MCF 10A (cell line): ENCODE measurements at regions of chr20 and their contacts with region 1.

Region 1: DNA sequence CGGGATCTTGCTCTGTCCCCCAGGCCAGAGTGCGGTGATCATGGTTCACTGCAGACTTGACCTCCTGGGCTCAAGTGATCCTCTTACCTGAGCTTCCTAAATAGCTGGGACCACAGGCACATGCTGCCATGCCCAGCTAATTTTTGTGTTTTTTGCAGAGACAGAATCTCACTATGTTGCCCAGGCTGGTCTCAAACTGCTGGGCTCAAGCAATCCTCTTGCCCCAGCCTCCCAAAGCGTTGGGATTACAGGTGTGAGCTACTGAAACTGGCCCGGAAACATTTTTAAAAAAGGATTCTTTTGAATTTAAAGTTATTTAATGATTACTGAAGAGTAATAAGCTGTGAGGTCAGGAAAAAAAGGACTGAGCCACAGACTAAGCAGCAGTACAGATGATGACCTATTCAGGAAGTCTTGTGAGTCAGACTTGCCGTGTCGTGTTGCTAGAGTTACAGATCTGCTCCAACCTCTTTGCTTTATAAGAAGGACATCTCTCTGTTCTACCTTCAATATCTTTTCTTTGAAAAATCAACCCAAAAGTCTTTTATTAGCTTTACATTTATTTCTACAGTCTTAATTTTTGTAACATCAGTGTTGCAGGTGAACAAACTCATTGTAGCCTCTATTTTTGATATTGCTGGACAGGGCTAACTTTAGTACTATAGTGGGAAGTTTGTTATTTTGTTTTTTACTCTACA is 108.7 kb downstream of the NCOA3 start:
- DNase-seq: peak; percentile 66
- H3K4me3 Mint-ChIP-seq: no peak overlapping the region
- H3K27ac Mint-ChIP-seq: peak overlapping the region; percentile 47
- H3K4me1 Mint-ChIP-seq: peaks cover 22% of the 10 kb centered on the region
- H3K27me3 Mint-ChIP-seq: no peaks in the 10 kb centered on the region
- CTCF ChIP-seq: no peak

Region 2: DNA sequence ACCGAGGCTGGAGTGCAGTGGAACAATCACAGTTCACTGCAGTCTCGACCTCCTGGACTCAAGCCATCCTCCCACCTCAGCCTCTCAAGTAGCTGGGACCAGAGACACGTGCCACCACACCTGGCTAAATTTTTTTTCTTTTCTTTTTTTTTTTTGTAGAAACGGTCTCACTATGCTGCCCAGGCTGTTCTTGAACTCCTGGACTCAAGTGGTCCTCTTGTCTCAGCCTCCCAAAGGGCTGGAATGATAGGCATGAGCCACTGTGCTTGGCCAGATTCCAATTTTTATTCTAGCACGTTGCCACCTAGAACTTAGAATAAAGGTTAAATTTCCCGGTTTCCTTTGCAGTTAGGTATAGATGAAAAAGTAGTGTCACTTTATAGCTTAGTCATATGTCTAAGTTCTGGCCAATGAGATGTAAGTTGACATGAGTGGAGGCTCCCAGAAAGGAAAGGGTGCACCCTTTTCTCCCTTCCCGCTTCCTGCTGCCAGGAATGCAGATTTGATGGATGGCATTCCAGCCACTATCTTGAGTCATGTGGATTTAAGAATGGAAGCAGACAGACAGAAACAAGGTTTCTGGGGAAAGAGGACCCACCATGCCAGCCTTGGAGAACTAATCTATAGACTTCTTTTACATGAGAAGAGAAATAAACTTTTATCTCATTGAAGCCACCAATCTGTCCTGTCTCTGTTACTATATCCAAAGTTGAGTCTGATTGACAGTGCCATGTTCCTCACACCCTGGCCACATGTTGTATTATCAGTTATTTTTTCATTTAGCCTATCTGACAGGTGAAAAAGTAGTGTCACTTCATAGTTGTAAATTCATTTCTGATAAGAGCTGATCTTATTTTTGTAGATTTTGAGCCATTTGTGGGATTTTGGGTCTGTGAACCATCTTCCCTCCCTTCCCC is 169.3 kb before region 1 on chr20:
- CTCF ChIA-PET with region 1: no interaction called
- POLR2A ChIA-PET with region 1: no interaction called
- intact Hi-C with region 1: no loop called
- DNase-seq: no peak
- H3K4me3 Mint-ChIP-seq: no peak overlapping the region
- H3K27ac Mint-ChIP-seq: no peak overlapping the region
- H3K4me1 Mint-ChIP-seq: peaks cover 6% of the 10 kb centered on the region
- H3K27me3 Mint-ChIP-seq: no peaks in the 10 kb centered on the region
- CTCF ChIP-seq: no peak

Region 3: DNA sequence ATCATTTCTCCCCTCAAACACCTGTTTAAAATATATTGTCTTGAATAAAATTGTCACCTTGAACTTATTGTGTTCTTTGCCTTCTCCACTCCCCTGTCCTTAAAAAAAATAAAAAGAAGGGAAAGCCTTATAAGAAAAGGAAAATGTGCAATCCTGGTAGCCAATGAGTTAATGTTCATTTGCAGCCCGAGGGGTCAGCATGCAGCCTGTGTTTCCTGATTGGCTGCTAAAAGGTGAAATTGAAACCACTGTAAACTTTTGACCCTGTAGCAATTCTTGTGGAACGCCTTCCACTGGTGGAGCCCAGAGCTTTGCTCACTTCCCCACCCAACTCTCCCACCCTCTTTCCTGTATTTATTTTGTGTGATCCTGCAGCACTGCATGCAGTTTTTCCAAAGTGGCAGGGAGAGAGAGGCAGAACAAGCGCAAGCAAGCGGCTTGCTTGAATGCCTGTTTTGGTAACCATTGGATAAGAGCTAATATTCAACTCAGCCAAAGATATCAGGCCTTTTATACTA is 33.8 kb before region 1 on chr20:
- CTCF ChIA-PET with region 1: interaction called, 4 read pairs
- POLR2A ChIA-PET with region 1: interaction called, 10 read pairs
- intact Hi-C with region 1: no loop called
- DNase-seq: peak; percentile 87
- H3K4me3 Mint-ChIP-seq: peak overlapping the region; percentile 52
- H3K27ac Mint-ChIP-seq: no peak overlapping the region
- H3K4me1 Mint-ChIP-seq: peaks cover 9% of the 10 kb centered on the region
- H3K27me3 Mint-ChIP-seq: no peaks in the 10 kb centered on the region
- CTCF ChIP-seq: no peak

Region 4: GRCh38 chr20:47620808-47621805 is 10.7 kb after region 1 on chr20:
- CTCF ChIA-PET with region 1: interaction called, 21 read pairs
- POLR2A ChIA-PET with region 1: interaction called, 13 read pairs
- intact Hi-C with region 1: no loop called
- DNase-seq: peak; percentile 53
- H3K4me3 Mint-ChIP-seq: no peak overlapping the region
- H3K27ac Mint-ChIP-seq: peak overlapping the region; percentile 19
- H3K4me1 Mint-ChIP-seq: peaks cover 12% of the 10 kb centered on the region
- H3K27me3 Mint-ChIP-seq: no peaks in the 10 kb centered on the region
- CTCF ChIP-seq: peak; percentile 72